Activated CD8-positive, alpha-beta T cell treated with anti-CD3 and anti-CD28 coated beads, Interleukin-2, amount 10 ng/mL, durations not matched to agents 7 days and 5 days (primary cell): ENCODE measurements at regions of chr6 and their contacts with region 1.

Region 1: GRCh38 chr6:31597006-31597405 is 4.2 kb upstream of the NCR3 start:
- DNase-seq: peak; percentile 68
- ATAC-seq: peak; percentile 68
- H3K4me3 Mint-ChIP-seq: no peak overlapping the region
- H3K27ac Mint-ChIP-seq: peak overlapping the region; percentile 43
- H3K4me1 Mint-ChIP-seq: peaks cover 59% of the 10 kb centered on the region
- H3K27me3 Mint-ChIP-seq: no peaks in the 10 kb centered on the region

Region 2: GRCh38 chr6:31541658-31542521 is 55.1 kb before region 1 on chr6 and contains the start of gene DDX39B:
- CTCF ChIA-PET with region 1: interaction called, 676 read pairs
- POLR2A ChIA-PET with region 1: interaction called, 23 read pairs
- DNase-seq: peak; percentile 96
- ATAC-seq: peak; percentile 82
- H3K4me3 Mint-ChIP-seq: peak within 1 kb of the TSS; percentile 96
- H3K27ac Mint-ChIP-seq: peak within 1 kb of the TSS; percentile 94
- H3K4me1 Mint-ChIP-seq: peaks cover 50% of the 10 kb centered on the region
- H3K27me3 Mint-ChIP-seq: no peaks in the 10 kb centered on the region
- total RNA-seq, gene DDX39B: 477 to 488 TPM

Region 3: DNA sequence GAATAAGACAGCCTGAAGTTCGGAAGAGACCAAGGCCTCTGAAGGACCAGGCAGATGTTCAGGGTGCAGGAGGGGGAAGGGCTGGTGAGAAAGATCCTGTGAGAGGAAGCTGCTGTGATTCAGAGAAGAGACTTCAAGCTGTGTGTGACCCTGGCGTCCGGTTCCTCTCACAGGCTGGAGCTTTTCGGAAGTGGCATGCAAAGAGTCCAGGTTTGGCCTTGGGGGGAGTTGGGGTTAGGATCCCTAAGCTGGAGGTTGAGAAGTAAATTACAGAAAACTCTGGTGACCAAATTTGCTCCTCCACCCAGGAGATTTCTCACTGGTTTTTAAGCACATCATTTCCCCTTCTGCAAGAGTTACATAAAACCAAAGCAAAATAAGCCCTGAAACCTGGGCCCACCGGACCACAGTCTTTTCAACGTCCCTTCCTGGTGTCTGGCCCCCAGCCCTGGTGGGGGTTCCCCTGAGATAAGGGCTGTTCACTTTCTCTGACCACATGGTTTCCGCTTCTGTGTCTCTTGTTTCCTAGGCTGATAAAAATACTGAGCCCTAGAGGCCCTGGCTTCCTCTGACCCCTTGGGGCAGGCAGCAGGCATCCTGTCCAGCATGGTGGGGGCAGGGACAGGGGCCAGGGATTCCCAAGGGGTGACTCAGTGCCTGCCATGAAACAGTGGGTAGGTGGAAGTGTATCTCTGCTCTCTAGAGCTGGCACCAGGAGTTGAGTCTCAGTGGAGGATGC is 36.9 kb before region 1 on chr6:
- CTCF ChIA-PET with region 1: interaction called, 99 read pairs
- POLR2A ChIA-PET with region 1: interaction called, 6 read pairs
- DNase-seq: peak; percentile 75
- ATAC-seq: peak; percentile 70
- H3K4me3 Mint-ChIP-seq: peak overlapping the region; percentile 65
- H3K27ac Mint-ChIP-seq: peak overlapping the region; percentile 82
- H3K4me1 Mint-ChIP-seq: peaks cover 65% of the 10 kb centered on the region
- H3K27me3 Mint-ChIP-seq: peaks cover 19% of the 10 kb centered on the region

Region 4: DNA sequence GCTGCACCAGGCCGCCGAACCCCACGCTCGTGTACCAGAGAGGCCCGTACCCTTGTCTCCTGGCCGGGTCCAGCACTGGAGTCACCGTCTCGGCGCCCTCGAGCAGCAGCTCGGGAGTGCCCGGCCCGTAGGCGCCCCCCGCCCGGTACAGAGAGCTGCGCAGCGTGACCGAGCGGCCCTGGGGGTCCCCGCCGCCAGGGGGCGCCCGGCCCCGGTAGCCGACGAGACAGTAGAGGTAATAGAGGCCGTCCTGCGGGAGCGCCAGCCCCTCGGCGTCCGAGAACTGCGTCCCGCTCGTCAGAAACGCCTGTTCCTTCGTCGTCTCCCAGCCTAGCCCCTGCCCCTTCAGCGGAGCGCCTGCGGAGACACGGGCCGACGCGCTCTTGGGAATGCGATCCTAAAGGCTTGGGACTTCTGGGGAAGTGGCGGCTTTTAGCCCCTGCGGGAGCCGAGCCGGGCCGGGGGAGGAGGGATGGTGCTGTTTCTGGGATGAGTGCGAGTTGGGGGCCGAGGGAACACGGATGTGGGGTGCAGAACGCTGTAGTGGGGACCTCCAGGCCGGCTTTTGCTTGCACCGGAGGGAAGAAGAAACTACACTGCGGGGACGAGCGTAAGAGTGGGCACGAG is 16.1 kb before region 1 on chr6:
- CTCF ChIA-PET with region 1: interaction called, 928 read pairs
- POLR2A ChIA-PET with region 1: interaction called, 388 read pairs
- DNase-seq: peak; percentile 90
- ATAC-seq: peak; percentile 70
- H3K4me3 Mint-ChIP-seq: peak overlapping the region; percentile 98
- H3K27ac Mint-ChIP-seq: peak overlapping the region; percentile 88
- H3K4me1 Mint-ChIP-seq: peaks cover 72% of the 10 kb centered on the region
- H3K27me3 Mint-ChIP-seq: no peaks in the 10 kb centered on the region

Region 5: DNA sequence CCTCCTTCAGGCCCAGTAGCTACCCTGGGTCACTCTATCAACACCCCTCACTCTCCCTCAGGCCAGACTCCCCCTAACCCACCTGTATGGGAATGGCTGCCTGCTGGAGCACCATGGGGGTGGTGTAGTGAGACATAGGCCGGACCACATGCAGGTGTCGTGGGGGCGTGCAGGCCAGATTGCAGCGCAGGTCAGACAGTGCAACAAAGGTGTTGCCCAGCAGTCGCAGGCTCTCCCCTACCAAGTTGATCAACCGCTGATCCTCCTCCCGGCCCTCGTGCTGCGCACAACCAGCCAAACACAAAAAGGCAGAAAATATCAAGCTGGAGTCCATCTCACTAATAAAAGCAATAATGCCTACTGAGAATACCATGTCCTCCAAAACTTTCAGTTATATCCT is 48.3 kb after region 1 on chr6:
- CTCF ChIA-PET with region 1: no interaction called
- POLR2A ChIA-PET with region 1: no interaction called
- DNase-seq: no peak
- ATAC-seq: no peak
- H3K4me3 Mint-ChIP-seq: no peak overlapping the region
- H3K27ac Mint-ChIP-seq: peak overlapping the region; percentile 10
- H3K4me1 Mint-ChIP-seq: peaks cover 28% of the 10 kb centered on the region
- H3K27me3 Mint-ChIP-seq: no peaks in the 10 kb centered on the region

Region 6: DNA sequence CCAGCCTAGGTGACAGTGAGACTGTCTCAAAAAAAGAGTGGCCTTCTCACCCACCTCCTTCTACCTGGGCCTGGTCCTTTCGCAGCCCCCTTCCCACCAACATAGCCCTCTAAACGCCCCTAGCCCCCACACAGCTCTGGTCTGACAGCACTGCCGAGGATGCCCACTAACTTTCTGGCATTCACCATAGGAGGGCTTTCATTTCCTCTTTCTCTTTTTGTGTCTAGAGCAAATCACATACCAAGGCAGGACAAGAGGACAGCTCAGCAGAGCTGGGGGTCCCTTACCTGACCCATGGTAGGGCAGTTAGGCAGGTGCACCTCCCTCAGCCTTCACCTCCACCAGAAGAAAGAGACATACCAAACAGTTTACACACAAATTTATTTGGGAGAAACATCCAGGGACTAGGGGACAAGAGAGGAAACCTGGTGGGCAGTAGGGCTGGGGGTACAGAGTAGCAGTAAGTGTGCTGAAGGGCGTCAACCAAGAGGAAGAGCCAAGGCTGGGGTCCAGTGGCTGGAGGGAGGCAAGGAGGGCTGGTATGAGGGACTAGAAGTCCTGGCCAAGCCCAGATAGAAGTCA is 79.4 kb after region 1 on chr6:
- CTCF ChIA-PET with region 1: no interaction called
- POLR2A ChIA-PET with region 1: no interaction called
- DNase-seq: no peak
- ATAC-seq: no peak
- H3K4me3 Mint-ChIP-seq: no peak overlapping the region
- H3K27ac Mint-ChIP-seq: peak overlapping the region; percentile 25
- H3K4me1 Mint-ChIP-seq: peaks cover 35% of the 10 kb centered on the region
- H3K27me3 Mint-ChIP-seq: no peaks in the 10 kb centered on the region